Head of caudate nucleus (tissue), 42 donors: ENCODE measurements at regions of chr3 and their contacts with region 1.

Region 1: GRCh38 chr3:12556671-12557472 is at the start of gene MKRN2:
- DNase-seq: peak; percentile 77 to 96 (median 88)

Region 2: GRCh38 chr3:12395349-12396012 is 161.4 kb before region 1 on chr3:
- intact Hi-C with region 1: no loop called
- DNase-seq: no peak

Region 3: DNA sequence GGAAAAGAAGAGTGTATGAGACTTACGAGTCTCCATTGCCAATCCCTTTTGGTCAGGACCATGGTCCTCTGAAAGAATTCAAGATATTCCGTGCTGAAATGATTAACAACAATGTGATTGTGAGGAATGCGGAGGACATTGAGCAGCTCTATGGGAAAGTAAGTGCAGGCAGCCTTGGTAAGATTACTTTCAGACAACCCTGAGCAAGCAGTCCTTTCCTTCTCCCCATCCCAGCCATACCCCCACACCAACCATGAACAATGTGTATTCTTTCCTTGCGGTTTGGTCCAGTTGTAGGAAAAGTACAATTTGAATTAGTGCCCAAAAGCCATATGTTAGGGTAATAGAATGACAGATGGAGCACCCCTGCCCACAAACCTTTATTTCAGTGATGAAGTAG is 67.0 kb before region 1 on chr3:
- intact Hi-C with region 1: loop called (anchors 5 kb)
- DNase-seq: no peak

Region 4: DNA sequence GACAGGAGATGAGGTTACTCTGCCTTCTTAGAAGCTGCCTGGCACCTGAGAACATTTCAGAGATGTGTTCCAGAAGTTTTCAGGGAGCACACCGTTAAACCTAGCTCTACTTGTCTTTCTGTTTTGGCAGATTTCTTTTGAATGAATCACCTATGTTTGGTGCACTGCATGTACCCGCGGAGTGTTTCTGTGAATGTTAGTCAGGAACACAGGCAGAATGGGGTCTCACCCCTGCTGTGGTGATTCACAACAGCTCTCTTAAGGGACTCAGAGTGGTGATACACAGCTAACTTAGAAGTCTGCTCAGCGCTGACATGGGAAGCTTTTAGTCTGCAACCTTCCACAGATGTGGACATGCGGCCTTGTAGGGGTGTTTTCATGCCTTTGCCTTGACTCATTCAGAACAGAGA is 48.6 kb before region 1 on chr3:
- intact Hi-C with region 1: no loop called
- DNase-seq: peak in 36 of 42 donors; percentile 10 to 79 (median 47)

Region 5: DNA sequence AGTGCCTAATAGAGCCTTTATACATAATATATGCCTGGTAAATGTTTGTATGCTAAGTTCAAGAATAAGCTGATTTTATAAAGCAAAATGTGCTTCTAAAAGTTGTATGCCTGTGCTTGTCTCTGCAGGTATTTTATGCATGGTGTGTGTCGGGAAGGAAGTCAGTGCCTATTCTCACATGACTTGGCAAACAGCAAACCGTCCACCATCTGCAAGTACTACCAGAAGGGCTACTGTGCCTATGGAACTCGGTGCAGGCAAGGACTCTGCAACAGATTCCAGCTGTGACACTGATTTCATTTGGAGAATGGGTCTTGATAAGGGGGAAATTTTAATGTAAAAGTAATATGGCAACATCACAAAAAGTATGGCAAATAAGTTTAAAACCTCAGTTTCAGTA is 11.9 kb after region 1 on chr3:
- intact Hi-C with region 1: no loop called
- DNase-seq: no peak

Region 6: GRCh38 chr3:12782172-12782815 is 225.4 kb after region 1 on chr3:
- intact Hi-C with region 1: no loop called
- DNase-seq: no peak